ENCODE measurements at regions of chr4 and their contacts with region 1.

Region 1: DNA sequence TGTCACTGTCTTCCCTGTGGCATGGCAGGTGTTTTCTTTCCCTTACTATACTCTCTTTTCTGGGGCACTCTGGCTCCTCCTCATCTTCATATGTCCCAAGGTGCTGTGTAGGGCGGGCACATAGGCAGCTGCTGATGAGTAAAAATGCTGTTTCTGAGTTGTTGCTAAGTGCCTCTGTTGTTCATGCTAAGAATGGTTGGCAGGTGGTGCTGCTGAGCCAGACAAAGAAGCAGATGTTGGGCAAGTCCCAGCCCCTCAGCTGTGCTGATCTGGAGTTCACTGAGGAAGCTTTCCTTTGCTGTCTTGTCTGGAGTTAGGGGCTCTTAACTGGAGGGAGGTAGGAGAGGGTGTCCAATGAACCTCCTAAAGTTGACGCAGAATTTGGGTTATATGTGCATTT is 40.6 kb downstream of the HADH start:
- DNase-seq: peak; percentile 89
- ATAC-seq: peak; percentile 83
- H3K4me3 Mint-ChIP-seq: peak overlapping the region; percentile 45
- H3K27ac Mint-ChIP-seq: peak overlapping the region; percentile 97
- H3K4me1 Mint-ChIP-seq: peaks cover 69% of the 10 kb centered on the region
- H3K27me3 Mint-ChIP-seq: no peaks in the 10 kb centered on the region
- CTCF ChIP-seq: peak; percentile 72

Region 2: GRCh38 chr4:107937040-107937785 is 93.1 kb before region 1 on chr4:
- CTCF ChIA-PET with region 1: no interaction called
- POLR2A ChIA-PET with region 1: no interaction called
- intact Hi-C with region 1: no loop called
- DNase-seq: no peak
- ATAC-seq: no peak
- H3K4me3 Mint-ChIP-seq: no peak overlapping the region
- H3K27ac Mint-ChIP-seq: no peak overlapping the region
- H3K4me1 Mint-ChIP-seq: peaks cover 22% of the 10 kb centered on the region
- H3K27me3 Mint-ChIP-seq: no peaks in the 10 kb centered on the region
- CTCF ChIP-seq: no peak

Region 3: GRCh38 chr4:108018040-108018883 is 12.1 kb before region 1 on chr4:
- CTCF ChIA-PET with region 1: interaction called, 55 read pairs
- POLR2A ChIA-PET with region 1: interaction called, 4 read pairs
- intact Hi-C with region 1: no loop called
- DNase-seq: peak; percentile 92
- ATAC-seq: peak; percentile 83
- H3K4me3 Mint-ChIP-seq: no peak overlapping the region
- H3K27ac Mint-ChIP-seq: no peak overlapping the region
- H3K4me1 Mint-ChIP-seq: peaks cover 14% of the 10 kb centered on the region
- H3K27me3 Mint-ChIP-seq: no peaks in the 10 kb centered on the region
- CTCF ChIP-seq: peak; percentile 85

Region 4: GRCh38 chr4:108053251-108053711 is 22.9 kb after region 1 on chr4:
- CTCF ChIA-PET with region 1: interaction called, 16 read pairs
- POLR2A ChIA-PET with region 1: interaction called, 13 read pairs
- intact Hi-C with region 1: no loop called
- DNase-seq: no peak
- ATAC-seq: no peak
- H3K4me3 Mint-ChIP-seq: no peak overlapping the region
- H3K27ac Mint-ChIP-seq: peak overlapping the region; percentile 98
- H3K4me1 Mint-ChIP-seq: peaks cover 87% of the 10 kb centered on the region
- H3K27me3 Mint-ChIP-seq: no peaks in the 10 kb centered on the region
- CTCF ChIP-seq: no peak

Region 5: GRCh38 chr4:108109997-108110416 is 79.7 kb after region 1 on chr4:
- CTCF ChIA-PET with region 1: interaction called, 16 read pairs
- POLR2A ChIA-PET with region 1: interaction called, 10 read pairs
- intact Hi-C with region 1: no loop called
- DNase-seq: no peak
- ATAC-seq: peak; percentile 20
- H3K4me3 Mint-ChIP-seq: peak overlapping the region; percentile 44
- H3K27ac Mint-ChIP-seq: peak overlapping the region; percentile 96
- H3K4me1 Mint-ChIP-seq: peaks cover 88% of the 10 kb centered on the region
- H3K27me3 Mint-ChIP-seq: no peaks in the 10 kb centered on the region
- CTCF ChIP-seq: no peak

Region 6: DNA sequence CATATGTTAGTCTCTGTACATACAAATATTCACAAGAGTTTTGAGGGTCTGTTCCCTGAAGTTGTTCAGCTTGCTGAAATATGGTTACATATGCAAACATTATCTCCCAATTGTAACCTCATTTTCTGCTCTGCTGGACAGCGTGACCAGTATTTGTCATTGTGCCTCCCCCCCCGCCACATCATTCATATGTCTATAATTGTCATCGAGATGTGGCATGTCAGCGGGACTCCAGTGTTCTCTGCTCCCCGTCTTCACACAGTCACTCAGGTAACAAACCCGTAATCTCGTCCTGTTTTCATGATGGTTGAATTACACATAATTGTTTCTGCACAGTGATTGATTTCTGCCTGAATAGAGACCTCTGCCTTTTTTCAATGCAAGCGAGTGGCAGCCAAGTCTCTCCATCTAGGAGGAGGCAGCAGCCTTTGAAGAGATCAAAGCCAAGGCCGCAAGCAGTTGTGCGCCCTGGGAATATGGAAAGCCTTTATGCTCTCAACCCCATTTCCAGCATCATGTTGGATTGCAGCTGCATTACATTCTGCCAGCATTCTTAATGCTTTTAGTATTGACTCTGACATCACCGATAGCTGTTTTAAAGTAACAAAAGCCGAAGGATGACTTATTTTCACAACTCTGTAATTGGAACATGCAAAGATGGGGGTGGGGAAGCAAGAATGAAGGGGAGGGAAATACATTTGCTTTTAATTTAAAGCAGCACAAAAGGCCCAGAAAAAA is 111.0 kb after region 1 on chr4:
- CTCF ChIA-PET with region 1: interaction called, 12 read pairs
- POLR2A ChIA-PET with region 1: interaction called, 4 read pairs
- intact Hi-C with region 1: no loop called
- DNase-seq: peak; percentile 69
- ATAC-seq: peak; percentile 37
- H3K4me3 Mint-ChIP-seq: peak overlapping the region; percentile 72
- H3K27ac Mint-ChIP-seq: peak overlapping the region; percentile 96
- H3K4me1 Mint-ChIP-seq: peaks cover 79% of the 10 kb centered on the region
- H3K27me3 Mint-ChIP-seq: no peaks in the 10 kb centered on the region
- CTCF ChIP-seq: no peak

Region 7: DNA sequence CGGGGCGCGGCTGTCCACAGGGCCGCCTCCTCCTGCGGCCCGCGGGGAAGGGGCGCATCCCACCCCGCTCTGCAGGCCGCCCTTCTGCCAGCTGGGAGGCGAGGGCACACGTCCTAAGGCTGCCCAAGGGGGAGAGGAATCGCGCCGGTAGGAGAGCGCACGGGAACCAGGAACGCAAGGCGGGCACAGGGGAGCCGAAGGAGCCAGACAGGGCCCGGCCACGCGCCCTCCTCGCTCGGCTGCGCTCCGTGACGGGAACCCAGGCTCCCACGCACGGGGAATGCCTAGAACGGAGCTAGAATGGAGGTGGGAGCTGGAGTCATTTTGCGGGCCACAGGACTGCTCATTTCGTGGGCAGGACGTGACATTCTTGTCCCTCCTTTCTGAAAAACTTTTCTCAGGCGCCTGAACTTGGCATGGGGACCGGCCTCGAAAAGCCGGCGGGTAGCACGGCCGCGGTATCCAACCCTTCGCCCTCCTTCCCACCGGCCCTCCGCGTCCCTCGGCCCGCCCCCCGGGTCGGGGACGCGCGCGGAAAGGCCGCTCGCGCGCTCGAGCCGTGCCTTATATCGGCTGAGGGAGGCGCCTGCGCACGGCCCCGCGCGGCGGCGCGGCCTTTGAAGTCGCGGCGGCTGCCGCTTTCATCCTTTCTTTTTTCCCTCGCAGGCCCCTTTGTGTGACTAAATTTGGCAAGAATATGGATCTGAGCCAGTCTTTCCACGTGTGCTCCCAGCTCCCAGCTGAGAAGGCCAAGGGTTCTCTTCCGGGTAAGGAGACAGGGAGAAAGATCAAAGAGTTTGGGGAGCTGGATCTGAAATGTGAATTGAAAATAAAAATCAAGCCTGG is 142.6 kb after region 1 on chr4:
- CTCF ChIA-PET with region 1: interaction called, 33 read pairs
- POLR2A ChIA-PET with region 1: interaction called, 19 read pairs
- intact Hi-C with region 1: loop called (anchors 2 kb)
- DNase-seq: peak; percentile 76
- ATAC-seq: peak; percentile 46
- H3K4me3 Mint-ChIP-seq: peak overlapping the region; percentile 96
- H3K27ac Mint-ChIP-seq: peak overlapping the region; percentile 95
- H3K4me1 Mint-ChIP-seq: peaks cover 38% of the 10 kb centered on the region
- H3K27me3 Mint-ChIP-seq: peaks cover 7% of the 10 kb centered on the region
- CTCF ChIP-seq: no peak

Region 8: DNA sequence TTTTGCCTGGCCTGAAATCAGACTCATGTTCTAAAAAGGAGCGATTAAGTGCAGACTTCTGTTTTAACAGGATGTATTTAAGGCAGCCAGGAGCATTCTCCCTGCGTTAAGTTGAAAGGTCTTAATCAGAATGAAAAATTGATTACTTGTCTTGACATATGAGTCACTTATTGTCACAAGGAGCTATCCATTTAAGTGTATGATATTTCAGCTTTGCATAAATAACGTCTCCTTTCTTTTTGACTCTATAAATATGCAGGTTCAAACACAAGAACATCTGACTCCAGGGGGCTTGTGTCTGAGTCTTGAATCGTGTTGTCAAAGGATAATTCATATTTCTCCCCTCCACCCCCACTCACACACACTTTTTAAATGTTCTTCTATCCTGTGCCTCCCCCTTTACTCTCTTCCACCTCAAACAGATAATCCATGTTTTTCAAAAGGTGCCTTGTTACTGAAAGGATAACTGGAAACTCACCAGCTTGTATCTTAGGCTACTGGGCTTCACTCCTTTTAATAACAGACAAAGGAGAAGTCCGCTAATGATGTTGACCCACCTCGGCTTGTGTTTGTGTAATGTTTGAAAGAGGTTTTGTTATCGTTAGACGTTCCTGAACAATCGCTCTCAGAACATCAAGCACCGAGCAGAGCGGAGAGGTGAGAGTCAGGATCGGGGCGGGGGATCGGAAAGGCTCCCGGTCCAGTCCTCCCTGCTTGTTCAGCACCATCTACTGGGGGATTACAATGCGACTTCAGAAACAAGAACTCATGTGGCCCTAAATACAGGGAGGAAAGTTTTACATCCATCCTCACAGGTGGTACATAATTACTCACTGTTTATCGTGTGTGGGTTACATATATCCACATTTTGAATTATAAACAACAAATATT is 482.5 kb after region 1 on chr4:
- CTCF ChIA-PET with region 1: interaction called, 6 read pairs
- POLR2A ChIA-PET with region 1: no interaction called
- intact Hi-C with region 1: loop called (anchors 5 kb)
- DNase-seq: peak; percentile 65
- ATAC-seq: peak; percentile 93
- H3K4me3 Mint-ChIP-seq: peak overlapping the region; percentile 62
- H3K27ac Mint-ChIP-seq: no peak overlapping the region
- H3K4me1 Mint-ChIP-seq: peaks cover 17% of the 10 kb centered on the region
- H3K27me3 Mint-ChIP-seq: no peaks in the 10 kb centered on the region
- CTCF ChIP-seq: peak; percentile 51